ENCODE measurements at regions of chr22 and their contacts with region 1.

Region 1: GRCh38 chr22:40031766-40032470 is 37.2 kb downstream of the FAM83F start:
- DNase-seq: no peak
- H3K4me3 ChIP-seq: no peak overlapping the region
- H3K27ac ChIP-seq: no peak overlapping the region
- H3K4me1 ChIP-seq: no peaks in the 10 kb centered on the region
- H3K27me3 ChIP-seq: no peaks in the 10 kb centered on the region
- CTCF ChIP-seq: no peak

Region 2: DNA sequence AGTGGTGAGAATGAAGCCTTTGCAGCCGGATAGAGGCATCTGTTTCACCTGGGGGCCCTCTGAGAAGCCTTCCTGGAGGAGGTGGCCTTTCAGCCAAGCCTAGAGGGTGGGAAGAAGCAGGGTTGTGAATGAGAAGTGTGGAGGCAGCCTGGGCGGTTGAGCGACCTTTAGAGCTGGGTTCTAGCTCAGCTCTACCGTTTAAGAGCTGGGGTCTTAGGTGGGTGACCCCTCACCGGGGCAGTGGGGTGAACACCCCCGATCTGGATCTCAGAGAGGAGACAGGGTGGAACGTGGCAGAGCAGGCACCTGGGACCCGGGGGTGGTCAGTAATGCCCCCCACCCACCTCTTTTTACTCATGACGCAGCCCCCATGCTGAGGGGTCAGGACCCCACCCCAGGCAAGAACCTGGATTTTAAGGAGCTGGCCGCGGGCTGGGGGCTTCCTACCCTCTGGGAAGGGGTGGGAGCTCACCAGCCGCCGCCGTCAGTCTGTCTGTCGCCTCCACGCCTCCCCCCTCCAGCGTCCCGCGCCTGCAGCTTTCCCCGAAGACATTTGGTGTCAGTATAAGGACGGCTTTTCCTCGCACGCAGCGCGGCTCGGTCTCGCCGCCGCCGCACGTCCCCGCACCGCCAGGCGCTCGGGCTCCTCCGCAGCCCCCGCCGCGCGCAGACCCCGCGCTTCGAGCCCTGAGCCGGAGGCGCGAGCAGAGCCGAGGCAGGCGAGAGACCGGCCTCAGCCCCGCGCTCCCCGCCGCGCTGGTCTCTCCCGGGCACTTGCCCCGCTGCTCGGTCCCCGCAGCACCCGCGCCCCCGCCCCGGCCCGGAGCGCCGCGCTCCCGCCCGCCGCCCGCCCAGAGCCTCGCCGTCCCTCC is 474.7 kb before region 1 on chr22:
- intact Hi-C with region 1: loop called (anchors 5 kb)
- DNase-seq: no peak
- H3K4me3 ChIP-seq: no peak overlapping the region
- H3K27ac ChIP-seq: no peak overlapping the region
- H3K4me1 ChIP-seq: no peaks in the 10 kb centered on the region
- H3K27me3 ChIP-seq: peaks cover 22% of the 10 kb centered on the region
- CTCF ChIP-seq: no peak

Region 3: DNA sequence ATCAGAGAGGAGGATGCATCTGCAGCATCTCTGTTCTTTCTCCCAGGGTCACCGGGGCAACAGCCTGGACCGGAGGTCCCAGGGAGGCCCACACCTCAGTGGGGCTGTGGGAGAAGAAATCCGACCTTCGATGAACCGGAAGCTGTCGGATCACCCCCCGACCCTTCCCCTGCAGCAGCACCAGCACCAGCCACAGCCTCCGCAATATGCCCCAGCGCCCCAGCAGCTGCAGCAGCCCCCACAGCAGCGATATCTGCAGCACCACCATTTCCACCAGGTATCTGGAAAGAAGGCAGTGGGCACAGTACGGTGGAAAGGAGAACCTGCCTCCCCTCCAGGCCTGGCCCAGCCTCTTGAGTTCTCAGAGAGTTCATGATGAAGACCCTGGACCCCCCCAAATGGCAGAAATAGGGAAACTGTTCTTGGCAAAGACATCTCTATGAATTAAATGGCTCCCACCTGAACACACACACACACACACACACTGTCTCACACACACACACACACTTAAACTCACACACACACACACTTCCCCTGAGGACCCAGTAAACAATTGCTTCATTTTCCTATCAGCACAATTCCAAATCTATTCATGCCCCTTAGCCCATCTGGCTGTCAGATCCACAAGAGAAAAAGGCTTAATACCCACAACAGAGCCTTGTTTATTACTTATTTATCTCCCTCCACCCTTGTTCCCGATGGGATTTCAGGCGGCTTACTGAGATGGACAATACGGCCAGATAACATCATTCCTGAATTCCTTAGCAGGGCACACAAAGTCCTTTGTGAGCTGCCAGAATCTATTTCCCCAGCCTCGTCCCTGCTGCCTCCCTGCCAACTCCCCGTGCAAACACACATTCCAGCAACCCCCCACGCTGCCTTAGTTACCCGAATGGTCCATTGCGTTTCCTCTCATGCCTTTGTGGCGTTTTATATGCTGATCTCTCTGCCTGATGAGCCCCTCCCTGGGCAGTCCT is 63.6 kb before region 1 on chr22:
- intact Hi-C with region 1: no loop called
- DNase-seq: no peak
- H3K4me3 ChIP-seq: no peak overlapping the region
- H3K27ac ChIP-seq: peak overlapping the region; percentile 67
- H3K4me1 ChIP-seq: peaks cover 6% of the 10 kb centered on the region
- H3K27me3 ChIP-seq: no peaks in the 10 kb centered on the region
- CTCF ChIP-seq: no peak